Activated CD8-positive, alpha-beta T cell treated with anti-CD3 and anti-CD28 coated beads, Interleukin-2, amount 10 ng/mL, durations not matched to agents 7 days and 5 days (primary cell): ENCODE measurements at regions of chr6 and their contacts with region 1.

Region 1: GRCh38 chr6:137873273-137873762 is 6.3 kb downstream of the TNFAIP3 start:
- DNase-seq: peak; percentile 44
- ATAC-seq: no peak
- H3K4me3 Mint-ChIP-seq: peak overlapping the region; percentile 94
- H3K27ac Mint-ChIP-seq: peak overlapping the region; percentile 42
- H3K4me1 Mint-ChIP-seq: peaks cover 83% of the 10 kb centered on the region
- H3K27me3 Mint-ChIP-seq: no peaks in the 10 kb centered on the region

Region 2: GRCh38 chr6:137717074-137718073 is 155.9 kb before region 1 on chr6:
- CTCF ChIA-PET with region 1: interaction called, 32 read pairs
- POLR2A ChIA-PET with region 1: interaction called, 39 read pairs
- DNase-seq: peak; percentile 88
- ATAC-seq: peak; percentile 72
- H3K4me3 Mint-ChIP-seq: no peak overlapping the region
- H3K27ac Mint-ChIP-seq: peak overlapping the region; percentile 84
- H3K4me1 Mint-ChIP-seq: peaks cover 55% of the 10 kb centered on the region
- H3K27me3 Mint-ChIP-seq: no peaks in the 10 kb centered on the region

Region 3: DNA sequence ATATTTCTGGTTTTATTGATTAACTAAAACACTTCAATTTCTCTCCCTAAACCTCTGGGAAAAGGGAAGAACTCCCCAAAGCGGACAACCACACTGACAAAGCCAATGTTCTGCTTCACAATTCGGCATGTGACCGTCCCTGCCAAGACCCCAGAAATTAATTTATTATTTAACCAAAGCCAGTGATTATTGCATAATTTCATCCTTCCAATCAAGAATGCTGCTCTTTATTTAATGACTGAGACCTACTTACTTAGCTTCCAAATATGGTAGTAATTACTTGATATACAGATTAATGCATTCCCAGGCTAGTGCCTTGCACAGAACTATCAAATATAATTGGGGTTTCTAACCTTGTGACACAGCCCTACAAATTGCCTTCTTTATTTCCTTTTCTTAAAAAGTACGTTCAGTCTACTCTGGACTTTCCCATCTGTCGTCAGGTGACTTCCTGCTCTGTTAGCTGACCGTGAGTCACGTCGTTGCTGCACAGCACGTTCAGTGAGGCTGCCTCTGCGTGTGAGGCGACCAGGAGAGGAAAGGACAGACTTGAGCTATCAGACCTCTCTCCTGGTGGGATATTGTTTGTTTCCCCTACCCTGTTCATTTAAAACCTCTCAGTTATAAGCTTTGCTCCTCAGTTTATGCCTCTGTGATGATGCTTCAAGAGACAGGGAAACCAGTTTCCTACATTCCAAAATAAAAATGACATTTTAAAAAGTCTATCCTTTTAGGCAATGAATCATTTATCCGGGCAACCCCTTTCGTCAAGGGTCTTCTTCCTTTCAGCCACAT is 62.0 kb before region 1 on chr6:
- CTCF ChIA-PET with region 1: interaction called, 62 read pairs
- POLR2A ChIA-PET with region 1: interaction called, 25 read pairs
- DNase-seq: peak; percentile 84
- ATAC-seq: peak; percentile 95
- H3K4me3 Mint-ChIP-seq: peak overlapping the region; percentile 35
- H3K27ac Mint-ChIP-seq: peak overlapping the region; percentile 72
- H3K4me1 Mint-ChIP-seq: peaks cover 42% of the 10 kb centered on the region
- H3K27me3 Mint-ChIP-seq: no peaks in the 10 kb centered on the region

Region 4: DNA sequence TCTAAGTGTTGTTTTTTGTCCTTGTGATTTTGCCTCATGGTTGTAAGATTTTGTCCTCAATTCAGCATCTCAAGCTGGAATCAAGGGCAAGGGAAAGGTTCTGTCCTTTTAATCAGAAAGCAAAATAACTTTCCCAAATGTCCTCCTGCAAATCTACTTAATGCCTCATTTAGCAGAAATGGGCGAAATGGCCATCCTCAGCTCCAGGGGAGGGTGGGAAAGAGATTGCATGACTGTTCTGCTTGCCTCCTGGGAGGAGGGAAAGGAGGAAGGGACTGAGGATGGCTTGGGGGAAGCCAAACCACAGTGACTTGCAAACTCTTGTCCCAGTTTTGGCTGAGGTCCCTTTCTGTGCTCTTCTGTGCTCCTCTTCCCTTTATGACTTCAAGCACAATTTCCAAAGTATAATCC is 37.1 kb after region 1 on chr6:
- CTCF ChIA-PET with region 1: interaction called, 13 read pairs
- POLR2A ChIA-PET with region 1: interaction called, 3 read pairs
- DNase-seq: no peak
- ATAC-seq: no peak
- H3K4me3 Mint-ChIP-seq: no peak overlapping the region
- H3K27ac Mint-ChIP-seq: no peak overlapping the region
- H3K4me1 Mint-ChIP-seq: peaks cover 45% of the 10 kb centered on the region
- H3K27me3 Mint-ChIP-seq: no peaks in the 10 kb centered on the region

Region 5: DNA sequence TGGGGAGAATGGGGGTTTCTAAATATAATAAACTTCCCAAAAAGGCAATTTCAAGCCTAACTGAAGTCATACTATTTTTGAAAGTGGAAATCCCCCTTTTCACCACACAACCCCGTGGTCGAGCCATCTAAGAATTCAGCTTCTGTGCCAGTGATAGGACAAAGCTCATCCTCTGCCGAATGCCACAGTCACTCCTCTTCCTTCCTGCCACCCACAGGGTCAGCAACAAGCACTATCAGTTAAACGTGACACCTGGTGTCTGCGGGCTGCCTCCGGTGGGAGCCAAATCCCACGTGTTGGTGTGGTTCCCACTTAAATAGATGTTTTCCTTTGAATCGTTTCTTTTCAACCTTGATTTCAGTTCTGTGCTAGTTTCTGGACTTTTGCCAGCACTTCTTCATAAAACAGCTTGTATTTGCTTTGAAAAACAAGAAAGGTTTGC is 54.5 kb after region 1 on chr6:
- CTCF ChIA-PET with region 1: interaction called, 555 read pairs
- POLR2A ChIA-PET with region 1: interaction called, 5 read pairs
- DNase-seq: peak; percentile 87
- ATAC-seq: peak; percentile 99
- H3K4me3 Mint-ChIP-seq: peak overlapping the region; percentile 52
- H3K27ac Mint-ChIP-seq: peak overlapping the region; percentile 69
- H3K4me1 Mint-ChIP-seq: peaks cover 45% of the 10 kb centered on the region
- H3K27me3 Mint-ChIP-seq: no peaks in the 10 kb centered on the region

Region 6: GRCh38 chr6:137938770-137939379 is 65.6 kb after region 1 on chr6:
- CTCF ChIA-PET with region 1: interaction called, 555 read pairs
- POLR2A ChIA-PET with region 1: interaction called, 16 read pairs
- DNase-seq: no peak
- ATAC-seq: no peak
- H3K4me3 Mint-ChIP-seq: no peak overlapping the region
- H3K27ac Mint-ChIP-seq: no peak overlapping the region
- H3K4me1 Mint-ChIP-seq: peaks cover 18% of the 10 kb centered on the region
- H3K27me3 Mint-ChIP-seq: no peaks in the 10 kb centered on the region